Common myeloid progenitor, CD34-positive (primary cell): ENCODE measurements at regions of chr2 and their contacts with region 1.

Region 1: GRCh38 chr2:112685271-112685884 is 35.4 kb upstream of the NT5DC4 start:
- DNase-seq: peak in 2 of 3 donors; percentile 50 to 56
- H3K4me3 ChIP-seq: no peak overlapping the region
- H3K27ac ChIP-seq: no peak overlapping the region
- H3K4me1 ChIP-seq: peaks cover 2 to 36% (median 11%) of the 10 kb centered on the region in 4 experiments
- H3K27me3 ChIP-seq: no peaks in the 10 kb centered on the region

Region 2: DNA sequence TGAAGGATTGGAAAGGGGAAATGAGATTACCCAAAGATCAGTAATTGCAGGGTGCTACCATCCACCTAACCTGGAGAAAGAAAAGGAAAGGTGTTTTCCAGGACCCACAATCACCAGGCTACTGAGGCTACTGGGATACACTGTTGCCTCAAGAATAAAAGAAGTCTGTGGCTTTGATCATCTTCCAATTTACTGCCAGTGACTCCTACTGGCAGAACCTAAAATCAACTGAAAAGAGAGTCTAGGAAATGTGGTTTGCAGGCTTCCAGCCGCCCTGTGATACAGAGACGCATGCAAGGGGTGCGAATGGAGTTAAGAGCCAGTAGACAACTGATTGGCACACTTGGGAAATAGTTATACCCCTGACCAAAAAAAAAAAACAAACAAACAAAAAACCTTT is 220.0 kb before region 1 on chr2:
- CTCF ChIA-PET with region 1: no interaction called
- POLR2A ChIA-PET with region 1: no interaction called
- DNase-seq: peak in 2 of 3 donors; percentile 40 to 51
- H3K4me3 ChIP-seq: no peak overlapping the region
- H3K27ac ChIP-seq: no peak overlapping the region
- H3K4me1 ChIP-seq: no peaks in the 10 kb centered on the region
- H3K27me3 ChIP-seq: no peaks in the 10 kb centered on the region

Region 3: DNA sequence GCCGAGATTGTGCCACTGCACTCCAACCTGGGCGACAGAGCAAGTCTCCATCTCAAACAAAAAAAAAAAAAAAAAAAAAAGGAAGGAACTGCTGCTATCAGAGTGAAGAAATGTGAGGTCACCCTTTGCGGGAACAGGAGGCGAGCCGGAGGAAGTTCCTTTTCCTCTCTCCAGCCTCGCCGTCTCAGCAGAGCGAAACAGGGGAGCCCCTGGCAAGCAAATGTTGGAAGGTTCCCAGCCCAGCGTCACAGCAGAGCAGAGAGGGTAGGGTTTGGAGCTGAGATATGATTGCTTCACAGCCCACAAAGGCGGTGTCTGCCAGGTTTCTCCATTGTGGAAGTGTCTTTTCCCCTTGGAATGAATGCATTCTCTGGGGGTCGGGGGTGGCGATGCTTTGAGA is 11.1 kb before region 1 on chr2:
- CTCF ChIA-PET with region 1: interaction called, 18 read pairs
- POLR2A ChIA-PET with region 1: interaction called, 3 read pairs
- DNase-seq: peak; percentile 86 to 93 (median 91)
- H3K4me3 ChIP-seq: peak overlapping the region in 6 of 7 experiments; percentile 20 to 65 (median 28)
- H3K27ac ChIP-seq: no peak overlapping the region
- H3K4me1 ChIP-seq: peaks cover 0 to 32% (median 18%) of the 10 kb centered on the region in 4 experiments
- H3K27me3 ChIP-seq: no peaks in the 10 kb centered on the region

Region 4: GRCh38 chr2:112706170-112706664 is 20.8 kb after region 1 on chr2:
- CTCF ChIA-PET with region 1: interaction called, 55 read pairs
- POLR2A ChIA-PET with region 1: interaction called, 4 read pairs
- DNase-seq: peak; percentile 97 to 99 (median 99)
- H3K4me3 ChIP-seq: peak overlapping the region in 3 of 7 experiments; percentile 26 to 50 (median 30)
- H3K27ac ChIP-seq: peak overlapping the region in 1 of 2 experiments; percentile 49
- H3K4me1 ChIP-seq: peaks cover 28 to 89% (median 70%) of the 10 kb centered on the region in 4 experiments
- H3K27me3 ChIP-seq: no peaks in the 10 kb centered on the region

Region 5: GRCh38 chr2:112962308-112963175 is 277.2 kb after region 1 on chr2:
- CTCF ChIA-PET with region 1: no interaction called
- POLR2A ChIA-PET with region 1: no interaction called
- DNase-seq: no peak
- H3K4me3 ChIP-seq: no peak overlapping the region
- H3K27ac ChIP-seq: no peak overlapping the region
- H3K4me1 ChIP-seq: peaks cover 0 to 3% (median 0%) of the 10 kb centered on the region in 4 experiments
- H3K27me3 ChIP-seq: no peaks in the 10 kb centered on the region